ENCODE measurements at regions of chr10 and their contacts with region 1.

Region 1: GRCh38 chr10:102835007-102835482 is 2.2 kb downstream of the CYP17A1 start:
- DNase-seq: peak; percentile 86
- H3K4me3 ChIP-seq: no peak overlapping the region; a peak in 1 of 4 replicates
- H3K27ac ChIP-seq: no peak overlapping the region
- H3K4me1 ChIP-seq: no peaks in the 10 kb centered on the region; a peak in 1 of 4 replicates
- H3K27me3 ChIP-seq: no peaks in the 10 kb centered on the region
- CTCF ChIP-seq: peak; percentile 88
- EP300 ChIP-seq: no peak
- RAD21 ChIP-seq: peak; percentile 94

Region 2: GRCh38 chr10:101818119-101818871 is 1016.8 kb before region 1 on chr10 and contains the start of gene OGA:
- CTCF ChIA-PET with region 1: no interaction called
- POLR2A ChIA-PET with region 1: no interaction called
- DNase-seq: peak; percentile 96
- H3K4me3 ChIP-seq: peak within 1 kb of the TSS; percentile 88 to 96
- H3K27ac ChIP-seq: peak within 1 kb of the TSS; percentile 81 to 97
- H3K4me1 ChIP-seq: peaks cover 6 to 21% of the 10 kb centered on the region in 2 experiments; a peak in 3 of 4 replicates
- H3K27me3 ChIP-seq: no peaks in the 10 kb centered on the region
- CTCF ChIP-seq: no peak
- EP300 ChIP-seq: peak in 1 of 2 experiments; percentile 53; a peak in 1 of 4 replicates
- RAD21 ChIP-seq: no peak
- polyA plus RNA-seq, gene OGA: 24.8 and 36.6 TPM in 2 replicates

Region 3: DNA sequence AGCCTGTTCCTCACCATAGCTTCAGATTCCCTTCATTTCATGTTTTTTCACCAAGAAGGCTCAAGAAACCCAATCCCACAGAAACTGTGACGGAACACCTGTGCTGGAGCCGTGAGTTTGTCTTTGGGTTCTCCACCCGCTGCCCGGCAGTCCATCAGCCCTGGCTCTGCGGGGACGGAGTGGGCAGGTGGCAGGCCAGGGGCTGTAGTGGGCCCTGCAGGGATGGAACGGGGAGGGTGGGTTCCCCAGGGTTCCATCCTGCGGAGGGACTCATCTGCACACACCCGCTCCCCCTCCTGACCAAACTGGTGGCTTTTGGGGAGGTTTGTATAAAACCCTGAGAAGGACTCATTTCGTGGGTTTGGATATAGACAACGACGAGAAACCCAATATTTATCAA is 12.8 kb before region 1 on chr10:
- CTCF ChIA-PET with region 1: interaction called, 12 read pairs
- POLR2A ChIA-PET with region 1: no interaction called
- DNase-seq: no peak
- H3K4me3 ChIP-seq: no peak overlapping the region
- H3K27ac ChIP-seq: no peak overlapping the region
- H3K4me1 ChIP-seq: no peaks in the 10 kb centered on the region
- H3K27me3 ChIP-seq: no peaks in the 10 kb centered on the region
- CTCF ChIP-seq: no peak
- EP300 ChIP-seq: no peak
- RAD21 ChIP-seq: no peak

Region 4: GRCh38 chr10:102845352-102845902 is 10.4 kb after region 1 on chr10:
- CTCF ChIA-PET with region 1: interaction called, 14 read pairs
- POLR2A ChIA-PET with region 1: no interaction called
- DNase-seq: no peak
- H3K4me3 ChIP-seq: no peak overlapping the region
- H3K27ac ChIP-seq: no peak overlapping the region
- H3K4me1 ChIP-seq: no peaks in the 10 kb centered on the region
- H3K27me3 ChIP-seq: no peaks in the 10 kb centered on the region
- CTCF ChIP-seq: no peak
- EP300 ChIP-seq: no peak
- RAD21 ChIP-seq: no peak

Region 5: GRCh38 chr10:102904346-102904745 is 69.3 kb after region 1 on chr10:
- CTCF ChIA-PET with region 1: interaction called, 71 read pairs
- POLR2A ChIA-PET with region 1: interaction called, 3 read pairs
- DNase-seq: no peak
- H3K4me3 ChIP-seq: no peak overlapping the region
- H3K27ac ChIP-seq: no peak overlapping the region
- H3K4me1 ChIP-seq: no peaks in the 10 kb centered on the region
- H3K27me3 ChIP-seq: no peaks in the 10 kb centered on the region
- CTCF ChIP-seq: no peak
- EP300 ChIP-seq: no peak
- RAD21 ChIP-seq: no peak

Region 6: DNA sequence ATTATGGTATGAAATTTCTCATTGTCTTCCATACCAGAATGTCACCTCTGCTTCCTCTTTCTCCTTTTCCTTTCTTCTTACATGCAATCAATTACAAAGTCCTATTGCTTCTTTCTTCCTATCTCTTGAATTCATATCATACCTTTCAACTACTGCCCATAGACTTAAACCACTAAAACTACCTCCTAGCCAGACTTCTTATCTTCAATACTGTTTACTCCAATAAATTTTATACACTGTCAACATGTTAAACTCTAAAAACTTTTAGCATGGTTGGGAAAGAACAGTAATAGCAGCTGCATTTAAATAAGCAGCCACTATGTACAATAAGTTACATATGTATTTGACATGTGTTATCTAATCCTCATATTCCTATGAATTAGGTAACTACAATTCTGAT is 481.0 kb after region 1 on chr10:
- CTCF ChIA-PET with region 1: no interaction called
- POLR2A ChIA-PET with region 1: no interaction called
- DNase-seq: no peak
- H3K4me3 ChIP-seq: no peak overlapping the region
- H3K27ac ChIP-seq: no peak overlapping the region
- H3K4me1 ChIP-seq: no peaks in the 10 kb centered on the region
- H3K27me3 ChIP-seq: no peaks in the 10 kb centered on the region
- CTCF ChIP-seq: no peak
- EP300 ChIP-seq: no peak
- RAD21 ChIP-seq: no peak

Measured in SK-N-SH (cell line).